IMR-90 (cell line): ENCODE measurements at regions of chr6 and their contacts with region 1.

Region 1: DNA sequence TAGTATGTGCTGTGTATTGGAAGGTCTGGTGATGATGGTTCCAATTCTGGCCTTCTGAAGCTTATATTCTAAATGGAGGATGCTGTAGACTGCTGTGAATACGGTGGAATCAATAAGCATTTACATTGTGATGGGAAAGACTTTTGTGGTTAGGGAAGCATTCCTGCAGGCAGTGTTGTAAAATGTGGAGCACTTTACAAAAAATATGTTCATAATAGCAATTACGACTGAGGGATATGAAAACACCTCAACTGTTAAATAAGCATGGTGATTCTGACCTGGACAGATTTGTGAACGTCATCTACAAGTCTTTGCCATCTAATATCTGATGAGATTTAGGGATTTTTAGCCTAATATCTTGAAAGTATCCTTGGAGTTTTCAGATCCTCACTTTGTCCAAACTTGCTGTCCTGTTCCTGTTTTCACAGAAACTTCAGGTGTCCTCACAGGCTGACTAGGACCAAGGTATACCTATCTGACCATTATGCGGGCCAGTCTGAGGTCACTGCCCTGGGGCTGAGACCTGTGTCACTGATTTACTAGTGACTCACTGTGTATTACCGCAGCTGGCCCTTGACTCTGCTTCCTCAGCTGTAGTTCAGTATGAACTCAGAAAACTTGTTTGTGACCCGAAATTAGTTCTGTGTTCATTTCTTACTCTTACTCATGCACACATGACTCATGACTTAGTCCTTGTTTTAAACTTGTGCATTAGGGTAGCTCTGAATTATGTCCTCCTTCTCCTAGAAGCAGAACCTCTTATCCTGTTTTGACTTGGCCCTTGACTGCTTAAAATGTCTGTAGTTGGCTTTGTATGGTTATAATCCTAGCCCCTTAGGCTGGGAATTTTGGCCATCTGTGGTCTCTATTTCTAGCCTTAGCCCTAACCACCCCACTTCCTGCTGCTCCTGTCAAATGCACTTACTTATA is 343.0 kb downstream of the CDKAL1 start:
- DNase-seq: peak; percentile 97
- ATAC-seq: peak; percentile 85
- H3K4me3 ChIP-seq: no peak overlapping the region
- H3K27ac ChIP-seq: peak overlapping the region; percentile 90
- H3K4me1 ChIP-seq: peaks cover 7% of the 10 kb centered on the region
- H3K27me3 ChIP-seq: no peaks in the 10 kb centered on the region
- CTCF ChIP-seq: no peak
- POLR2A ChIP-seq: no peak
- RAD21 ChIP-seq: peak; percentile 25; the same call in 1 of the 2 replicates

Region 2: DNA sequence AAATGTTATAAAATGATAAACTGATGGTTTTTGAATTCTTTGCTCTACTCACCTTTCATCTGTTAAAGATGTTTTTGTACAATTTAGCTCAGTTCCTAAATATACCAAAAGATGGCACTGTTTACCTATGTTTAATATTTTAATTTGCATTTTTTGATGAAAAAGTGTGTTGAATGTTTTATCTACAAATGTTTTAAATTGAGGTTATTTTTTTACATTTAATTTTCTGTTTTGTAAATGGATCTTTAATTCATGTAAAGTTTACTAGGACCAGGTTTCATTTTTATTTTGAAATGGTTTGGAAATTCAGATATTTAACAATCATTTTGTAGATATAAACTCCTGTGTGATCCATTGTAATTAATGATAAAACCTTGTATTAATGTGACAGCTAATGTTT is 313.0 kb before region 1 on chr6:
- CTCF ChIA-PET with region 1: no interaction called
- POLR2A ChIA-PET with region 1: no interaction called
- dilution Hi-C with region 1: no loop called
- in situ Hi-C with region 1: no loop called
- intact Hi-C with region 1: loop called (anchors 2 kb)
- DNase-seq: peak; percentile 27
- ATAC-seq: peak; percentile 64
- H3K4me3 ChIP-seq: no peak overlapping the region
- H3K27ac ChIP-seq: no peak overlapping the region
- H3K4me1 ChIP-seq: no peaks in the 10 kb centered on the region; the same call in 1 of the 2 replicates
- H3K27me3 ChIP-seq: no peaks in the 10 kb centered on the region
- CTCF ChIP-seq: peak; percentile 59
- POLR2A ChIP-seq: no peak
- RAD21 ChIP-seq: peak; percentile 61

Region 3: DNA sequence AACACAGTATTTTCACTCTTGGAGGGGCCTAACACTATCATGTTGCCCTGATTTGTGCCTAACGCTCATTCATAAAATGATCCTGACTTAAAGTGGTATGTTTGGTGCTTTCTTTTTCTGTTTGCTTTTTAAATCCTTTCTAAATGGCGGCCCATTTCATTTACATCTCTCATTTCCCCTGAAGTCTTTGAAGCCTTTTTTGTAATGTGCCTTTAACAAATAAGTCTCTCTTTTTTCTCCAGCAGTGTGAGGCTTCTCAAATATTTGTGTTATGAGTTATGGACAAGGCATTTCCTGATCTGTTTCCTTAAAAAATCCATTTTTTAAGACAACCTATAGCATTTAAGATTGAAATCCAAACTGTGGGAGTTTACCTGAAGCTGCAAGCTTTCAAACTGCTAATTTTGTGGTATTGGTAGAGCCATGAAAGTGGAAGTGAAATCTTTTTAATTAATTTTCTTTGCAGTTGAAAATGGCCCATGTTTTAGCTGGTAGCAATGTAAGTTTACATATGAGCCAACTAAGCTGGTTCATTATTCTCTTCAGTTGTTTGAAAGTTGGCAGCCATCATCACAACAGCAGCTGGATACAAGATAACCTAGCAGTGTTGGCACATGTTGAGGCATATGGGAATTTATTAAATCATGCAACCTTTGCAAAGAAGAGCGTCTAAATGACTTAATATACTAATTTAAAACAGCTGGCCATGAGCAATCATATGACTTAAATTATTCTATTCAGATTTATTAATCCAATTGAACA is 126.7 kb after region 1 on chr6:
- CTCF ChIA-PET with region 1: no interaction called
- POLR2A ChIA-PET with region 1: no interaction called
- dilution Hi-C with region 1: no loop called
- in situ Hi-C with region 1: no loop called
- intact Hi-C with region 1: loop called (anchors 5 kb)
- DNase-seq: peak; percentile 89
- ATAC-seq: peak; percentile 77
- H3K4me3 ChIP-seq: no peak overlapping the region
- H3K27ac ChIP-seq: peak overlapping the region; percentile 13; the same call in 1 of the 2 replicates
- H3K4me1 ChIP-seq: peaks cover 5% of the 10 kb centered on the region; the same call in 1 of the 2 replicates
- H3K27me3 ChIP-seq: no peaks in the 10 kb centered on the region
- CTCF ChIP-seq: no peak
- POLR2A ChIP-seq: no peak
- RAD21 ChIP-seq: no peak

Region 4: GRCh38 chr6:21132856-21133838 is 255.9 kb after region 1 on chr6:
- CTCF ChIA-PET with region 1: no interaction called
- POLR2A ChIA-PET with region 1: no interaction called
- dilution Hi-C with region 1: no loop called
- in situ Hi-C with region 1: no loop called
- intact Hi-C with region 1: no loop called
- DNase-seq: no peak
- ATAC-seq: no peak
- H3K4me3 ChIP-seq: no peak overlapping the region
- H3K27ac ChIP-seq: no peak overlapping the region
- H3K4me1 ChIP-seq: no peaks in the 10 kb centered on the region; the same call in 1 of the 2 replicates
- H3K27me3 ChIP-seq: no peaks in the 10 kb centered on the region
- CTCF ChIP-seq: no peak
- POLR2A ChIP-seq: no peak
- RAD21 ChIP-seq: no peak

Region 5: GRCh38 chr6:21501021-21501354 is 623.7 kb after region 1 on chr6:
- CTCF ChIA-PET with region 1: no interaction called
- POLR2A ChIA-PET with region 1: no interaction called
- dilution Hi-C with region 1: no loop called
- in situ Hi-C with region 1: no loop called
- intact Hi-C with region 1: loop called (anchors 10 kb)
- DNase-seq: no peak
- ATAC-seq: no peak
- H3K4me3 ChIP-seq: no peak overlapping the region
- H3K27ac ChIP-seq: no peak overlapping the region
- H3K4me1 ChIP-seq: peaks cover under 1% of the 10 kb centered on the region; the same call in 1 of the 2 replicates
- H3K27me3 ChIP-seq: no peaks in the 10 kb centered on the region
- CTCF ChIP-seq: no peak
- POLR2A ChIP-seq: no peak
- RAD21 ChIP-seq: no peak

Region 6: GRCh38 chr6:21769405-21769861 is 892.2 kb after region 1 on chr6:
- CTCF ChIA-PET with region 1: no interaction called
- POLR2A ChIA-PET with region 1: no interaction called
- dilution Hi-C with region 1: no loop called
- in situ Hi-C with region 1: no loop called
- intact Hi-C with region 1: loop called (anchors 10 kb)
- DNase-seq: peak; percentile 98
- ATAC-seq: peak; percentile 84
- H3K4me3 ChIP-seq: no peak overlapping the region
- H3K27ac ChIP-seq: peak overlapping the region; percentile 41; the same call in 1 of the 2 replicates
- H3K4me1 ChIP-seq: peaks cover 6% of the 10 kb centered on the region
- H3K27me3 ChIP-seq: no peaks in the 10 kb centered on the region
- CTCF ChIP-seq: no peak
- POLR2A ChIP-seq: peak; percentile 68; the same call in 1 of the 2 replicates
- RAD21 ChIP-seq: no peak

Region 7: GRCh38 chr6:21864206-21864605 is 986.9 kb after region 1 on chr6:
- CTCF ChIA-PET with region 1: no interaction called
- POLR2A ChIA-PET with region 1: interaction called, 10 read pairs
- dilution Hi-C with region 1: no loop called
- in situ Hi-C with region 1: no loop called
- intact Hi-C with region 1: no loop called
- DNase-seq: no peak
- ATAC-seq: no peak
- H3K4me3 ChIP-seq: no peak overlapping the region
- H3K27ac ChIP-seq: no peak overlapping the region
- H3K4me1 ChIP-seq: no peaks in the 10 kb centered on the region
- H3K27me3 ChIP-seq: no peaks in the 10 kb centered on the region
- CTCF ChIP-seq: no peak
- POLR2A ChIP-seq: no peak
- RAD21 ChIP-seq: no peak